Caco-2 (cell line): ENCODE measurements at regions of chr12 and their contacts with region 1.

Region 1: GRCh38 chr12:117367011-117367638 is 5.7 kb upstream of the NOS1 start:
- DNase-seq: peak; percentile 69 to 81
- H3K4me3 ChIP-seq: no peak overlapping the region
- H3K4me3 Mint-ChIP-seq: no peak overlapping the region
- H3K27ac Mint-ChIP-seq: no peak overlapping the region
- H3K4me1 ChIP-seq: no peaks in the 10 kb centered on the region
- H3K4me1 Mint-ChIP-seq: no peaks in the 10 kb centered on the region
- H3K27me3 ChIP-seq: no peaks in the 10 kb centered on the region; the same call in 1 of the 2 replicates
- H3K27me3 Mint-ChIP-seq: peaks cover 19% of the 10 kb centered on the region
- CTCF ChIP-seq: peak; percentile 76 to 92

Region 2: GRCh38 chr12:117212563-117213190 is 154.4 kb before region 1 on chr12:
- CTCF ChIA-PET with region 1: interaction called, 3 read pairs
- POLR2A ChIA-PET with region 1: no interaction called
- intact Hi-C with region 1: loop called (anchors 1 kb)
- DNase-seq: peak; percentile 57 to 73
- H3K4me3 ChIP-seq: no peak overlapping the region
- H3K4me3 Mint-ChIP-seq: no peak overlapping the region
- H3K27ac Mint-ChIP-seq: no peak overlapping the region
- H3K4me1 ChIP-seq: no peaks in the 10 kb centered on the region
- H3K4me1 Mint-ChIP-seq: no peaks in the 10 kb centered on the region
- H3K27me3 ChIP-seq: no peaks in the 10 kb centered on the region
- H3K27me3 Mint-ChIP-seq: peaks cover 30% of the 10 kb centered on the region
- CTCF ChIP-seq: peak; percentile 86 to 88

Region 3: DNA sequence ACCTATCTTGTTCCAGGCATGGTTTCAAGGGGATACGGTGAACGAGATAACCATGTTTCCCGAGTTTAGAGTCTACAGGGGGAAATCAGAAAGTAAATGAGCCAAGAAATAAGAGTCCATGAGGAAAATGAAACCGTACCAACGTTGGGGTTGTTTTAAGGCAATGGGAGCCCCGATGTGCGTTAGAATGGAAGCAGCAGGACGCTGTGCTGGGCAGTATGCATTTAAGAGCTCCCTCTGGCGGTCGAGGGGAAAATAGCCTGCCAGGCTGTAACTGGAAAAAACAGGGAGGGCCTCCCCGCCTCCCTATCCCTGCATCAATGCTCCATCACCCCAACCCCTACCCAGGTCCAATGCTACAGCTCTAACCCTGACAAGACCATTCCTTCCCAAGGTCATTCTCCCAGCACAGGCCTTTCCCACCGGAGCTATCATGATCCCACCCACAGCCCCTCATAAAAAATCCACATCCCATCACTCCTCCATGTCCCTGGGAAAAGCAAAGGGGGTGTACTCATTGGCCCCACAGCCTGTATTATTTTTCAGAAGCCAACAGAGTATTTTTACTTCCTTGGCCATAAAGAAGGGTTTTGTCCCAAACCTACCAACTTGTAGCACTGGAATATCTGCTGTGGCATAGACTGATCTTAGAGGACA is 220.6 kb after region 1 on chr12:
- CTCF ChIA-PET with region 1: interaction called, 42 read pairs
- POLR2A ChIA-PET with region 1: no interaction called
- intact Hi-C with region 1: loop called (anchors 1 kb)
- DNase-seq: peak; percentile 55 to 70
- H3K4me3 ChIP-seq: no peak overlapping the region
- H3K4me3 Mint-ChIP-seq: peak overlapping the region; percentile 30
- H3K27ac Mint-ChIP-seq: no peak overlapping the region
- H3K4me1 ChIP-seq: no peaks in the 10 kb centered on the region
- H3K4me1 Mint-ChIP-seq: peaks cover 6% of the 10 kb centered on the region
- H3K27me3 ChIP-seq: no peaks in the 10 kb centered on the region
- H3K27me3 Mint-ChIP-seq: peaks cover 9% of the 10 kb centered on the region
- CTCF ChIP-seq: peak; percentile 84 to 85

Region 4: DNA sequence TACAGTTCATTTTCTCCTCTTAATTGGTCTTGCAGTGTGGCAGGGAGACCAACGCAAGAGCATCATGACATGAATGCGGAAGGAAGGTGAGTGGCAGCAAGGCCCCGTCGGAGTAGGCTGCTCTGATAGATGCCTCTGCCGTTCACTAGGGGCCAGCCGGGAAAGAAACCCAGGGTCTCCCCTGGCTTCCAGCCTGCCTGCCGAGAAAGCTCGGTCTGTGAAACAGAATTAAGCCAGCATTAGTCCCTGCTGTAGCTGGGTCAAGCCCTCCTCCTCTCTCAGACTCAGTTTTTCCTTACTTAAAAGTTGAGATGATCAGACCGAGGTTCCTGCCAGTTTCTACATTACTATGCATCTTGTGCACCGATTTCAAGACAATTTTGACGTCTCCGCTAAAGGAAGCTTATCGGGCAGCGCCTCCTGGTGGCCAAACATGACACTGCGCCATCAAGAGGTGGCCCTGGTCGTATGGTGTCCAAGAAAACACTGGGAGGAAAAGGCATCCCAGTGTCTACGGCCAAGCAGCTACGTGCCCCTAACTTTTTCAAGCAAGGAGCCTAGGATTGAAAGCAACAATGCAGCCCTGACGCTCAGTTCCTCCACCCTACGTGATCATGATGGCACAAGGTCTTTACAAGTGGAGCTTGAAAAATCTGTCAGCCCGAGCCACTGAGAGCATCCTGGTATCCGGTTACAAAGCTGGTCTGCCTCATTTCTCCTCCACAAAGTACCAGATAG is 470.0 kb after region 1 on chr12:
- CTCF ChIA-PET with region 1: interaction called, 27 read pairs
- POLR2A ChIA-PET with region 1: no interaction called
- intact Hi-C with region 1: loop called (anchors 1 kb)
- DNase-seq: peak; percentile 61 to 78
- H3K4me3 ChIP-seq: no peak overlapping the region
- H3K4me3 Mint-ChIP-seq: no peak overlapping the region
- H3K27ac Mint-ChIP-seq: no peak overlapping the region
- H3K4me1 ChIP-seq: no peaks in the 10 kb centered on the region
- H3K4me1 Mint-ChIP-seq: no peaks in the 10 kb centered on the region
- H3K27me3 ChIP-seq: no peaks in the 10 kb centered on the region
- H3K27me3 Mint-ChIP-seq: peaks cover 5% of the 10 kb centered on the region
- CTCF ChIP-seq: peak; percentile 95 to 96

Region 5: DNA sequence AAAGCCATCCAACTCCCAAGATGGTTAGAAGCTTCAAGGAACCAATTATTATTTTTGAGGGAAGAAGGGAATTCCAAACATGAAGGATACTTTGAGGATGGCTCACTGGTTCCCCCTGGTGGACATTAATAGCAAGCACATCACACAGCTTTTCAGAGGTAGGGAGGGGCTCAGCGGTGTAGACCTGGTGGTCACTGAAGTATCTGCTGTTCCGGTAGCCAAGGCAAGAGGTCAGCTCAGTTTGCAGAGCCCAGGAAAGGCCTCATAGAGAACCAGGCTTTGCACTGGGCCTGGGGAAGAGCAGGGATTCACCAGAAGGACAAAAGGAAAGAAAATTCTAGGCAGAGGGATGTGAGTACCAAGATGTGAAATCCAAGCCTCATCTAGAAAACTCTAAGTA is 482.9 kb after region 1 on chr12:
- CTCF ChIA-PET with region 1: interaction called, 7 read pairs
- POLR2A ChIA-PET with region 1: no interaction called
- intact Hi-C with region 1: loop called (anchors 5 kb)
- DNase-seq: peak; percentile 46 to 58
- H3K4me3 ChIP-seq: no peak overlapping the region
- H3K4me3 Mint-ChIP-seq: no peak overlapping the region
- H3K27ac Mint-ChIP-seq: no peak overlapping the region
- H3K4me1 ChIP-seq: no peaks in the 10 kb centered on the region; the same call in 1 of the 2 replicates
- H3K4me1 Mint-ChIP-seq: no peaks in the 10 kb centered on the region
- H3K27me3 ChIP-seq: no peaks in the 10 kb centered on the region
- H3K27me3 Mint-ChIP-seq: peaks cover 5% of the 10 kb centered on the region
- CTCF ChIP-seq: peak; percentile 75 to 77

Region 6: GRCh38 chr12:117857632-117858612 is 490.8 kb after region 1 on chr12:
- CTCF ChIA-PET with region 1: interaction called, 12 read pairs
- POLR2A ChIA-PET with region 1: no interaction called
- intact Hi-C with region 1: loop called (anchors 5 kb)
- DNase-seq: peak; percentile 58 to 63
- H3K4me3 ChIP-seq: no peak overlapping the region
- H3K4me3 Mint-ChIP-seq: no peak overlapping the region
- H3K27ac Mint-ChIP-seq: no peak overlapping the region
- H3K4me1 ChIP-seq: no peaks in the 10 kb centered on the region; the same call in 1 of the 2 replicates
- H3K4me1 Mint-ChIP-seq: no peaks in the 10 kb centered on the region
- H3K27me3 ChIP-seq: no peaks in the 10 kb centered on the region
- H3K27me3 Mint-ChIP-seq: no peaks in the 10 kb centered on the region
- CTCF ChIP-seq: peak; percentile 45